ENCODE measurements at regions of chr13 and their contacts with region 1.

Region 1: DNA sequence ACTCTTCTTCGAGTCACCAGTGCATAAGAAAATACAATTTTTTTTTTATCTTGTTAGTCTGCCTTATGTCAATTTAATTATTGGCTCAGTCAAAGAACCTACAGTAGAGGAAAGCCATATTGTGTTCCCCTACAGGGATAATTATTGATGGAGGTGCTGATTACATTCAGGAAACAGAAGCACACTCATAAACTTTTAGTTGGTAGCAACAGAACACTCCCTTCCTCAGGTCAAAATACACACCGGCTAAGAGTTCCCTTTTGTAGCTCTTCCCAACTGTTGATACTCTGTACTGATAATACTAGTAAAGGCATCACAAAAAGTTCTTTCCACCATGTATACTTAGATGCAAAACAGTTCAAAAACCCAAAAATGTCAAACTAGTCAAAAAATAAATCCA is 18.4 kb downstream of the FOXO1 start:
- DNase-seq: no peak
- ATAC-seq: no peak
- H3K4me3 Mint-ChIP-seq: no peak overlapping the region
- H3K27ac Mint-ChIP-seq: peak overlapping the region; percentile 25
- H3K4me1 Mint-ChIP-seq: peaks cover 95% of the 10 kb centered on the region
- H3K27me3 Mint-ChIP-seq: no peaks in the 10 kb centered on the region
- CTCF ChIP-seq: no peak

Region 2: GRCh38 chr13:40637643-40638042 is 10.4 kb before region 1 on chr13:
- CTCF ChIA-PET with region 1: interaction called, 13 read pairs
- POLR2A ChIA-PET with region 1: interaction called, 4 read pairs
- intact Hi-C with region 1: no loop called
- DNase-seq: no peak
- ATAC-seq: no peak
- H3K4me3 Mint-ChIP-seq: no peak overlapping the region
- H3K27ac Mint-ChIP-seq: peak overlapping the region; percentile 55
- H3K4me1 Mint-ChIP-seq: peaks cover 82% of the 10 kb centered on the region
- H3K27me3 Mint-ChIP-seq: no peaks in the 10 kb centered on the region
- CTCF ChIP-seq: no peak

Measured in activated CD8-positive, alpha-beta T cell treated with anti-CD3 and anti-CD28 coated beads for 36 hours (primary cell).